ENCODE measurements at regions of chr15 and their contacts with region 1.

Region 1: DNA sequence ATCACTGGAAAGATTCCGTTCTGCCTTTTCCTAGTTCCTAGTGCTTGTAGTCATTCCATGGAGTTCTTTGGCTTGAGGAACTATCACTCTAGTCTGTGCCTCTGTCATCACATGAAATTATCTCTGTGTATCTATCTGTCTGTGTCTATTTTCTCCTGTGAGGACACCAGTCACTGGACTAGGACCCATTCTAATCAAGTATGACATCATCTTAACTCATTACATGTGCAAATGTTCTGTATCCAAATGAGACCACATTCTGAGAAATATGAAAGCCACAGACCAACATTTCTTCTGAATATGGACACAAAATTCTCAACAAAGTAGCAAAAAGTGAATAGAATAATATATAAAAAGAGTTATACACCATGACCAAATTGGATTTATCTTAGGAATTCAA is 291.5 kb downstream of the GABRB3 start:
- DNase-seq: no peak
- ATAC-seq: no peak
- H3K4me3 ChIP-seq: no peak overlapping the region
- H3K27ac ChIP-seq: no peak overlapping the region
- H3K4me1 ChIP-seq: no peaks in the 10 kb centered on the region
- H3K27me3 ChIP-seq: no peaks in the 10 kb centered on the region
- CTCF ChIP-seq: no peak
- POLR2A ChIP-seq: no peak
- RAD21 ChIP-seq: no peak

Region 2: DNA sequence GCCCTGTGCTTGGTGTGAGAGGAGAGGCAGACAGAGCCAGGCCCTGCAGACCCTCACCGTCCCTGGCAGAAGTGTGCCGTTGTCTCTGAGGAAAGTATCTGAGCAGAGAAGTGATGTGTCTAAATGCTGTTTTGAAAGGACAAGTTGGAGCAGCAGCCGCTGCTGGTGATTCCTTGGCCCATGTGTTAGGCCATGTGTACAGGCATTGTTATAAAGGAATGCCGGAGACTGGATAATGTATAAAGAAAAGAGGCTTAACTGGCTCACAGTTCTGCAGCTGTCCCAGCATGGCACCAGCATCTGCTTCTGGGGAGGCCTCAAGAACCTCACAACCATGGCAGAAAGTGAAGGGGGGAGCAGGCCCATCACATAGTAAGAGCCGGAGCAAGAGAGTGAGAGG is 283.6 kb before region 1 on chr15:
- CTCF ChIA-PET with region 1: no interaction called
- POLR2A ChIA-PET with region 1: no interaction called
- dilution Hi-C with region 1: no loop called
- in situ Hi-C with region 1: no loop called
- intact Hi-C with region 1: no loop called
- DNase-seq: no peak
- ATAC-seq: no peak
- H3K4me3 ChIP-seq: no peak overlapping the region
- H3K27ac ChIP-seq: no peak overlapping the region
- H3K4me1 ChIP-seq: no peaks in the 10 kb centered on the region
- H3K27me3 ChIP-seq: no peaks in the 10 kb centered on the region
- CTCF ChIP-seq: no peak
- POLR2A ChIP-seq: no peak
- RAD21 ChIP-seq: no peak

Region 3: GRCh38 chr15:26537663-26538062 is 56.3 kb after region 1 on chr15:
- CTCF ChIA-PET with region 1: no interaction called
- POLR2A ChIA-PET with region 1: no interaction called
- dilution Hi-C with region 1: no loop called
- in situ Hi-C with region 1: loop called (anchors 10 kb)
- intact Hi-C with region 1: no loop called
- DNase-seq: no peak
- ATAC-seq: no peak
- H3K4me3 ChIP-seq: no peak overlapping the region
- H3K27ac ChIP-seq: no peak overlapping the region
- H3K4me1 ChIP-seq: no peaks in the 10 kb centered on the region
- H3K27me3 ChIP-seq: no peaks in the 10 kb centered on the region
- CTCF ChIP-seq: no peak
- POLR2A ChIP-seq: no peak
- RAD21 ChIP-seq: no peak

Region 4: GRCh38 chr15:26620528-26621458 is 139.5 kb after region 1 on chr15:
- CTCF ChIA-PET with region 1: no interaction called
- POLR2A ChIA-PET with region 1: no interaction called
- dilution Hi-C with region 1: no loop called
- in situ Hi-C with region 1: no loop called
- intact Hi-C with region 1: no loop called
- DNase-seq: no peak
- ATAC-seq: no peak
- H3K4me3 ChIP-seq: no peak overlapping the region
- H3K27ac ChIP-seq: no peak overlapping the region
- H3K4me1 ChIP-seq: no peaks in the 10 kb centered on the region
- H3K27me3 ChIP-seq: no peaks in the 10 kb centered on the region
- CTCF ChIP-seq: no peak
- POLR2A ChIP-seq: no peak
- RAD21 ChIP-seq: no peak